ENCODE measurements at regions of chr17 and their contacts with region 1.

Region 1: GRCh38 chr17:78365561-78366108 is 5.8 kb upstream of the SOCS3 start:
- DNase-seq: no peak
- H3K4me3 Mint-ChIP-seq: no peak overlapping the region
- H3K27ac Mint-ChIP-seq: no peak overlapping the region
- H3K4me1 Mint-ChIP-seq: peaks cover 19% of the 10 kb centered on the region
- H3K27me3 Mint-ChIP-seq: peaks cover 5% of the 10 kb centered on the region

Region 2: DNA sequence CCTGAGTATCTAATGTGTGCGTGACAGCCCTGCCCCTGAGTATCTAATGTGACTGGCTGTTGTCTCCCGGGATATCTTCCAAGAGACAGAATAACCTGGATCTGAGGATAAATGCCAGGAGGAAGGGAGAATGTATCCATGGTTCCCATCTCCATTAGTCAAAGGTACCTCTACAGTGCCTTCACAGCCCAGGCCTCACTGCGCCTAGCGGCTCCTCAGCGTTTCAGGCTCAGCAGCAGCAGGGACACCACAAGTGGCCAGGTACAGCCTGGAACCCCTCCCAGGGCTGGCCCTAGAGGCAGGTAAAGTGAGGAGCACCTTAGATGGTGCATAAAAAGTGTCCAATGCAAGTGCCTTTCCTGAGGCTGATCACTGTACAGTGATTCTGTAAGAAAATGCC is 37.8 kb before region 1 on chr17:
- CTCF ChIA-PET with region 1: no interaction called
- POLR2A ChIA-PET with region 1: no interaction called
- DNase-seq: no peak
- H3K4me3 Mint-ChIP-seq: no peak overlapping the region
- H3K27ac Mint-ChIP-seq: no peak overlapping the region
- H3K4me1 Mint-ChIP-seq: peaks cover 37% of the 10 kb centered on the region
- H3K27me3 Mint-ChIP-seq: no peaks in the 10 kb centered on the region

Region 3: GRCh38 chr17:78383725-78384471 is 18.3 kb after region 1 on chr17:
- CTCF ChIA-PET with region 1: interaction called, 17 read pairs
- POLR2A ChIA-PET with region 1: interaction called, 6 read pairs
- DNase-seq: peak; percentile 41
- H3K4me3 Mint-ChIP-seq: peak overlapping the region; percentile 65
- H3K27ac Mint-ChIP-seq: peak overlapping the region; percentile 93
- H3K4me1 Mint-ChIP-seq: peaks cover 90% of the 10 kb centered on the region
- H3K27me3 Mint-ChIP-seq: no peaks in the 10 kb centered on the region

Region 4: DNA sequence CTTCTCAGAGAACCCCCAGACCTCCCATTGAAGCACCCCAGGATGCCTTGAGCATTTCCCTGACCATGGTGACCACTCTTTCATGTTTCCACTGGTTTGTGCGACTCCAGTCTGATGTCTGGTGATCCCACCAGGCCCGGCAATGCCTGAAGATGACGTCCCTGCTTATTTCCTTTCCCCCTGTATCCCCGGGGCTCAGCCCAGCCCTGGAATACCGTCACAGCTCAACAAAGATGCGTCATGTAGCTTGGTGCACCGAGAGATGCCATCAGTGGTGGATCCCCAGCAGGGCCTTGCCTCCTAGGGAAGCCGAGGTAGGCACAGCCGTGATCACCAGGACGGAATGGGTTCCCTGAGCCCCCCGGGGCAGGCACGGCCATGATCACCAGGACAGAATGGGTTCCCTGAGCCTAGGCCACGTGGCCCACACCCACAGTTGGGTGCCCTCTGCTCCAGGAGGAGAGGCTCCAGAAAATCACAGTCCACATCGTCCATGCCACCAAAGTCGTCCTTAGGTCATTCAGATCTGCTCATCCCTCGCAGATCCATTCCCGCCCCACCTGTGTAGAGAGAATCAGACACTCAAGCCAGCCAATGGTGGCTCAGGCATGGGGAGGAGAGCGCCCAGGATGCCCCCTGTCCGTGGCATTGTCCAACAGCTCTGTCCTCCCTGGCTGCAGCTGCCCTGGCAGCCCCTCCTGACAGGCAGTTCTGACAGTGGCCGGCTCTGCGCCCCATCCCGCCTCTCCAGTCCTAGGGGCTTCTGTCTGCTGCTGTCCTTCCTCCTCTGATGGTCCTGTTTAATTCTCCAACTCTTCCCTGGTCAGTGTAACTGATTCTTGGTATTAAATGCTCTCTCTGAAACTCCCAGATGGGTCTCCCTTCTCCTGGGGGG is 984.1 kb after region 1 on chr17:
- CTCF ChIA-PET with region 1: no interaction called
- POLR2A ChIA-PET with region 1: no interaction called
- DNase-seq: no peak
- H3K4me3 Mint-ChIP-seq: no peak overlapping the region
- H3K27ac Mint-ChIP-seq: no peak overlapping the region
- H3K4me1 Mint-ChIP-seq: no peaks in the 10 kb centered on the region
- H3K27me3 Mint-ChIP-seq: peaks cover 18% of the 10 kb centered on the region

Measured in activated CD4-positive, alpha-beta T cell treated with anti-CD3 and anti-CD28 coated beads, Interleukin-2, amount 10 ng/mL, durations not matched to agents 7 days and 5 days (primary cell).